GM10248 (cell line): ENCODE measurements at regions of chr9 and their contacts with region 1.

Region 1: GRCh38 chr9:89428901-89429890 is 68.7 kb downstream of the SEMA4D start:
- DNase-seq: peak; percentile 64
- CTCF ChIP-seq: peak; percentile 56

Region 2: GRCh38 chr9:89400403-89401116 is 28.6 kb before region 1 on chr9:
- CTCF ChIA-PET with region 1: interaction called, 15 read pairs
- POLR2A ChIA-PET with region 1: no interaction called
- DNase-seq: peak; percentile 72
- CTCF ChIP-seq: no peak

Region 3: DNA sequence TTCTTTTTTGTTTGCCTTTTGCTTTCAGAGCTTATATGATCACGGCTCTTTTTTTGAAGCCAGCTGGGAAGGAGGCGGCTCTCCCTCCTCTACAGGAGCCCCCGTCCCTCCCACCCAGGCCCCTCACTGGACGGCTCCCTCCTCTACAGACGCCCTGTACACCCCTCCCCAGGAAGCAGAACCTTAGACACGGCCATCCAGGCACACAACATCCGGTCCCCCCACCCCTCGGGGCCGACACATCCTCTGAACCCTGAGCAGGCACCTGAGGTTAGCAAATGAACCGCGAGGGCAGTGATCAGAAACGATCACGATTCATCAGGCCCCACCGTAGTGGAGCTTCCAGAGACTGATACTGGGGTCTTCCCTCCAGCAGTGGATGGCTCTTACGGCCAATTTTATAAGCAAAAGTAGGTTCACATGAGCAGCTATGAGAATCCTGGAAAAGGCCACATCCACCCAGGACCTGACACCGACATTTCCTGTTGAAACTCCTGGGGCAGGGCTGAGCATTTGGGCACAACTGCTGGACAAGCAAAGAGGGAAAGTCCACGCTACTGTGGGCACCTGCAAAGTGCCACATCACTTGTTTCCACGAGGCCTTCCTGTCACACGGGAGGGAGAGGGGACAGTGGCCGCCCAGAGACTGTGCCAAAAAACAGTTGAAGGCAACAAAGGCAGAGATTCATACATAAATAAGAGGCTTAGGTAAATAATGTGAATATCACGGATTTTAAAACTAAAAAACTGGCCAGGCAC is 10.1 kb before region 1 on chr9:
- CTCF ChIA-PET with region 1: interaction called, 34 read pairs
- POLR2A ChIA-PET with region 1: interaction called, 4 read pairs
- DNase-seq: peak; percentile 69
- CTCF ChIP-seq: no peak

Region 4: GRCh38 chr9:89455356-89455824 is 26.2 kb after region 1 on chr9:
- CTCF ChIA-PET with region 1: interaction called, 22 read pairs
- POLR2A ChIA-PET with region 1: no interaction called
- DNase-seq: no peak
- CTCF ChIP-seq: no peak

Region 5: DNA sequence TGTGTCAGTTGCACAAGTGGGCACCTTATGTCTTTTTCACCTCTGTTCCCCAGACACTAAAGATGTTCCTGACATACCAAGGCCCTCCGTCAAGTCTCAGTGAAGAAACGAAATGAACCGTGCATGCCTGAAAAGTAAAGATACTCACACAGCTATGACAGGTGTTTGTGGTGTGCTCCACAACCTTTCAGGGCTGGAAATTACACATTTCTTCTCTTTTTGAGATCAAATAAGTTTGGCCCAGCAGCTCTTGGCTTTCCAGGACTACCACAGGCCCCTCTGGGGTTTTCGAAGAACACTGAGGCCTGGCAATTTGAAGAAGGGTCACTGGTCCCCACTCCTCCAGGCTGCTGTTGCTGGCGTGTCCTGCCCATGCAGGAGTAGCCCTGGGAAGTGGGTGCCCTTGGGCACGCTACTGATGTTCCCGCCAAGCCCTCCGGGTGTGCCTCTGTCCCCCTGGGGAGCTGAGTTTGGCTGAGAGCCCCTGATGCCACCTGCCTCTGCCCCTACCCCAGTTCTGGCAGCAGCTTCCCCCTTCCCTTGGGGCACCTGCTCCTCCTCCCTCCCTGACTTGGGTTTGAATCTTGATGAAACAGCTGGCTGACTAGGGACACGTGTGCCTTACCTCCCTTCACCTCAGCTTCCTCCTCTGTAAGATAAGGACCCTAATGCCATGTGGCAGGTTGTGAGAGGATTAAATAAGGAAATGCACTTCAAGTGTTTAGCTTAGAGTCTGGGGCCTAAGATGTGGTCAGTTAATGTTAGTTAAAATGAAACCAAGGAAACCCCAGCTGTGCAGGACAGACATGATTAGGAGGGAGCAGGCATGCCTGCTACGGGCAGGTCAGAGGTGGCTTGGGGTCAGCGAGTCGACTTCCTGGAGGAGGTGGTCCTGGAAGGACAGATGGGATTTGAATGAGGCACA is 126.5 kb after region 1 on chr9:
- CTCF ChIA-PET with region 1: interaction called, 14 read pairs
- POLR2A ChIA-PET with region 1: no interaction called
- DNase-seq: peak; percentile 65
- CTCF ChIP-seq: no peak